PC-3 (cell line): ENCODE measurements at regions of chr14 and their contacts with region 1.

Region 1: DNA sequence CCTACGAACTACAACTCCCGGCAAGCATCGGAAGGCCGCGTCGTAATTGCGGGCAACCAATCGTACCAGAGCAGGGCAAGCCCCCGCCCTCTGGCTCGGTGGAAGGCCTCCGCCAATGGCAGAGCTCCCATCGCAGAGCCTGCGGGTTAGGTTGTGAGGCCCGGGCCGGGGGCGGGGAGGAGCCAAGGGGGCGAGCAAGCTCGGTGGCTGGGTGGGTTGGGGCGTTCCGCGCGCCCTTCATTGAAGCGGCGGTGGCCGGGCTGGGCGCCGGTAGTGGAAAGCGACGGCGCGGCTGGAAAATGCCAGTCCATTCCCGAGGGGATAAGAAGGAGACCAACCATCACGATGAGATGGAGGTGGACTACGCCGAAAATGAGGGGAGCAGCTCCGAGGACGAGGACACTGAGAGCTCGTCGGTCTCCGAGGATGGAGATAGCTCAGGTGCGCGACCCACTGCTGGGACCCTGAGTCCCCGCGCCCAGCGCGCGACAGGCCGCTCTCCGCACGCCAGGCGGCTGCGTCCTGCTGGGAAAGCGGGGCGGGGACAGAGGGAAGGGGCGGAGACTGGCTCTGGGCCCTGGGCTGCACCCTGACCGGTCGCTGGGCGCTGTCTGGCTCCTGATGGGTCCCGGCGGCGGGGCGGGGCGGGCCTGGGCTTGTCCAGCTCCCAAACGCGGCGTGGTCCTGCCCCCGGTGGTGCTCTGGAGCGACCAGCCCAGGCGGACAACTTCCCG is at the start of gene BRMS1L:
- DNase-seq: peak; percentile 99
- ATAC-seq: peak; percentile 90
- H3K4me3 ChIP-seq: peak within 1 kb of the TSS; percentile 91
- H3K27ac ChIP-seq: peak within 1 kb of the TSS; percentile 81
- H3K4me1 ChIP-seq: peaks cover 7% of the 10 kb centered on the region; the same call in 1 of the 2 replicates
- H3K27me3 ChIP-seq: no peaks in the 10 kb centered on the region
- CTCF ChIP-seq: no peak
- total RNA-seq, gene BRMS1L: 4.8 and 10.3 TPM in 2 replicates

Region 2: DNA sequence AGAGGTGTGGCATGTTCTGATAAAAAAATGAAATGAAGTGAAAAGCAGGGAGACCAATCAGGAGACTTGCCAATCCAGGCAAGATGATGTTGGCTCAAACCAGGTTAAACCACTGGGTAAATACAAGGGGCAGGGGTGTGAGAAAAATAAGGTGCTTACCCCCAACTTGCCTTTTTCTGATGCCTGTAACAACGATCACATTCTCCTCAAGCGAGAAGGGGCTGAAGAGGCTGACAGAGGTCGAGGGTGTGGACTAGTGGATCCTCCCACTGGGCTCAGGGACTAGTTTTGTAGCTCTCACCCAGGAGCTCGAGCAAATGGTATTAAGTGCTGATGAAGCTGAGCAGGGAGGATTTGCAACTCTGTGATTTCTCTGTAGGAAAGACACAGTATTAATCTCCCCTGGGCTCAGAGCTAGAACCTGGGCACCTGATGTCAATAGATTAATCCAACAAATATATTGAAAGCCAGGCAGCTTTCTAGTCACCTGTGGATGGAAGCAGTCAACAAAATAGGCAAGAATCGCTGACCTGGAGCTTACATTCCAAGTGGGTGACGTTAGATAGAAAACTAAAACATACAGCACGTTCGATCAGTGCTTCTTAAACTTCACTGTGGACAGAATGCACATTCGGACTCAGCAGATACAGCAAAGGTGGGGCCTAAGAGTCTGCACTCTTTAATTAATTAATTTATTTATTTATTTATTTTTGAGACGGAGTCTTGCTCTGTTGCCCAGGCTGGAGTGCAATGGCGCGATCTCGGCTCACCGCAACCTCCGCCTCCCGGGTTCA is 1271.6 kb before region 1 on chr14:
- CTCF ChIA-PET with region 1: no interaction called
- POLR2A ChIA-PET with region 1: interaction called, 20 read pairs
- intact Hi-C with region 1: no loop called
- DNase-seq: peak; percentile 52
- ATAC-seq: no peak
- H3K4me3 ChIP-seq: peak overlapping the region; percentile 35; the same call in 1 of the 2 replicates
- H3K27ac ChIP-seq: peak overlapping the region; percentile 27
- H3K4me1 ChIP-seq: peaks cover 9% of the 10 kb centered on the region
- H3K27me3 ChIP-seq: no peaks in the 10 kb centered on the region
- CTCF ChIP-seq: no peak

Region 3: DNA sequence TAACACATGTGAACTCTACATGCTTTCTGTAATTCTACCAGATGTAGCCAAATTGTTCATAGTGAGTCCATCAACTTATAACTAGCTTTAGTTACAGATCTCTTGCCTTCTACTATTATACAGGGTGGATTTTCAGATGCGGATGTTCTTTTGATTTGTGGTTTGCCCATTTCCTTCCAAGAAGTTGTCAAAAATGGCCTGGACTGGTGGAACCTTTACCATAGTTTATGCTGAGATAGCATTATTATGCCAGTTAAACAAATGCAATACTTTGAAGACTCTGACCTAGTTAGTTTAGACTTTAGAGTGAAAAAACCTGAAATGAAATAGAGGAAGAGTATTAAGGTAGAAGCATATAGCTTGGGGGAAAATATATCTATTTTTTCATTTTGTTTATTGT is 1084.5 kb before region 1 on chr14:
- CTCF ChIA-PET with region 1: no interaction called
- POLR2A ChIA-PET with region 1: no interaction called
- intact Hi-C with region 1: no loop called
- DNase-seq: no peak
- ATAC-seq: no peak
- H3K4me3 ChIP-seq: no peak overlapping the region
- H3K27ac ChIP-seq: no peak overlapping the region
- H3K4me1 ChIP-seq: no peaks in the 10 kb centered on the region
- H3K27me3 ChIP-seq: no peaks in the 10 kb centered on the region
- CTCF ChIP-seq: no peak

Region 4: DNA sequence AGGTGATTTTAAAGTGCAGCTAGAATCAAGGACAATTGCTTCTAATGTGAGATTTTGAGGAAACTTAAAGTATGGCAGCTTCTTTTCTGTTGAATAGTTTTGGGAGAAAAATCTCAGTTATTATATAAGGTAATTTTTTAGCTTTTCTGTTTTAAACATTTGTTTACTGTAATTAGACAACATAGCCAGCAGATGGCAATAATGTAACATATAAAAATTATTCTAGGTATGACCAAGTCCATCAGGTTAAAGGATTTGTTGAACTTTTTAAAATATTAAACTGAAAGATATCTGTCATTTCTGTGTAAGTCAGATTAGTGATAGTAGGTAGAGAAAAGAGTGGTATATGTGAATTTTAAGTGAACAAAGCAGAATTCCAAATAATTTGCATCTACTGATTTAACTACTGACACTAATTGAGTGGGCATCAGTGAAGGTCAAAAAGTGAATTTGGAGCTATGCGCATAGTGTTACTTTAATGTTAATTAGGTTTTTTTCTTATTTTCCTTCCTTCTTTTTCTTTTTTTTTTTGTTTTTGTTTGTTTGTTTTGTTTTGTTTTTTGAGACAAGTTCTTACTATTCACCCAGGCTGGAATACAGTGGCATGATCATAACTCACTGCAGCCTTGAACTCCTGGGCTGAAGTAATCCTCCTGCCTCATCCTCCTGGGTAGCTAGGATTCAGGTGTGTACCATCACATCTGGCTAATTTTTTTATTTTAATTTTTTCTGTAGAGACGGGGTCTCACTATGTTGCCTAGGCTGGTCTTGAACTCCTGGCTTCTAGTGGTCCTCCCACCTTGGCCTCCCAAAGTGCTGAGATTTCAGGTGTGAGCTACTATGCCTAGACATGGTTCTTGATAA is 685.4 kb before region 1 on chr14:
- CTCF ChIA-PET with region 1: no interaction called
- POLR2A ChIA-PET with region 1: interaction called, 22 read pairs
- intact Hi-C with region 1: no loop called
- DNase-seq: peak; percentile 61
- ATAC-seq: peak; percentile 20; the same call in 1 of the 2 replicates
- H3K4me3 ChIP-seq: no peak overlapping the region
- H3K27ac ChIP-seq: no peak overlapping the region
- H3K4me1 ChIP-seq: no peaks in the 10 kb centered on the region
- H3K27me3 ChIP-seq: no peaks in the 10 kb centered on the region
- CTCF ChIP-seq: peak; percentile 73

Region 5: DNA sequence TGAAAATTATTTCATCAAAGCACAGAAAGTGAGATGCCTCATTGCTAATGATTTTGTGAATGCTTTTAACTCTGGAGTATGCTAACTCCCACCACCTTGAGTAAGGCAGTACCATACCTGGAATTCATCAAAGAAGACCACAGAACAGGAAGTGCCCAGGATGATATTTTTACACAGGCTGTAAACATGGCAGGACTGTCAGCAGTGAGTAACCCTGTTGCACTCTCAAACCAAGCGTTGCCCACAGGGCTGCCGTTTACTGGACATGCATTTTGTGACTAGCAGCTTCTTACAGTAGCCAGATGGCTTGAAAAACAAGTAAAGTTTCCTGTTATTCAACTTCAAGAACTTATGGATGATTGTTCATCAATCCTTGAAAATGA is 59.7 kb before region 1 on chr14:
- CTCF ChIA-PET with region 1: no interaction called
- POLR2A ChIA-PET with region 1: no interaction called
- intact Hi-C with region 1: no loop called
- DNase-seq: no peak
- ATAC-seq: no peak
- H3K4me3 ChIP-seq: no peak overlapping the region
- H3K27ac ChIP-seq: no peak overlapping the region
- H3K4me1 ChIP-seq: no peaks in the 10 kb centered on the region
- H3K27me3 ChIP-seq: no peaks in the 10 kb centered on the region
- CTCF ChIP-seq: no peak

Region 6: DNA sequence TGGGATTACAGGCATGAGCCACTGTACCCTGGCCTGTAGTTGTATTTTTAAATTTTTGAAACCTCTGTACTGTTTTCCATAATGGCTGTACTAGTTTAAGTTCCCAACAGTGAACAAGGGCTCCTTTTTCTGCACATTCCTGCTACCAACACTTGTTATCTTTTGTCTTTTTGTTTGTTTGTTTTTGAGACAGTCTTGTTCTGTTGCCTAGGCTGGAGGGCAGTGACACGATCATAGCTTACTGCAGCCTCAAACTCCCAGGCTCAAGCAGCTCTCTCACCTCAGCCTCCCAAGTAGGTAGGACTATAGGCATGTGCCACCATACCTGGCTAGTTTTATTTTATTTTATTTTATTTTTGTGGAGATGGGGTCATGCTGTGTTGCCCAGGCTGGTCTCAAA is 22.7 kb after region 1 on chr14:
- CTCF ChIA-PET with region 1: no interaction called
- POLR2A ChIA-PET with region 1: no interaction called
- intact Hi-C with region 1: no loop called
- DNase-seq: no peak
- ATAC-seq: no peak
- H3K4me3 ChIP-seq: no peak overlapping the region
- H3K27ac ChIP-seq: no peak overlapping the region
- H3K4me1 ChIP-seq: no peaks in the 10 kb centered on the region
- H3K27me3 ChIP-seq: no peaks in the 10 kb centered on the region
- CTCF ChIP-seq: no peak

Region 7: GRCh38 chr14:35878272-35879150 is 52.1 kb after region 1 on chr14:
- CTCF ChIA-PET with region 1: interaction called, 4 read pairs
- POLR2A ChIA-PET with region 1: interaction called, 5 read pairs
- intact Hi-C with region 1: loop called (anchors 1 kb)
- DNase-seq: peak; percentile 94
- ATAC-seq: peak; percentile 74
- H3K4me3 ChIP-seq: peak overlapping the region; percentile 23; the same call in 1 of the 2 replicates
- H3K27ac ChIP-seq: peak overlapping the region; percentile 50
- H3K4me1 ChIP-seq: peaks cover 32% of the 10 kb centered on the region
- H3K27me3 ChIP-seq: no peaks in the 10 kb centered on the region
- CTCF ChIP-seq: no peak

Region 8: GRCh38 chr14:36320200-36320896 is 494.0 kb after region 1 on chr14 and contains the start of gene MBIP:
- CTCF ChIA-PET with region 1: no interaction called
- POLR2A ChIA-PET with region 1: interaction called, 17 read pairs
- intact Hi-C with region 1: no loop called
- DNase-seq: peak; percentile 97
- ATAC-seq: peak; percentile 88
- H3K4me3 ChIP-seq: peak within 1 kb of the TSS; percentile 95
- H3K27ac ChIP-seq: peak within 1 kb of the TSS; percentile 39
- H3K4me1 ChIP-seq: peaks cover 31% of the 10 kb centered on the region
- H3K27me3 ChIP-seq: peaks cover 37% of the 10 kb centered on the region; the same call in 1 of the 2 replicates
- CTCF ChIP-seq: no peak
- total RNA-seq, gene MBIP: 7.8 and 8.5 TPM in 2 replicates